ENCODE measurements at regions of chr16 and their contacts with region 1.

Region 1: DNA sequence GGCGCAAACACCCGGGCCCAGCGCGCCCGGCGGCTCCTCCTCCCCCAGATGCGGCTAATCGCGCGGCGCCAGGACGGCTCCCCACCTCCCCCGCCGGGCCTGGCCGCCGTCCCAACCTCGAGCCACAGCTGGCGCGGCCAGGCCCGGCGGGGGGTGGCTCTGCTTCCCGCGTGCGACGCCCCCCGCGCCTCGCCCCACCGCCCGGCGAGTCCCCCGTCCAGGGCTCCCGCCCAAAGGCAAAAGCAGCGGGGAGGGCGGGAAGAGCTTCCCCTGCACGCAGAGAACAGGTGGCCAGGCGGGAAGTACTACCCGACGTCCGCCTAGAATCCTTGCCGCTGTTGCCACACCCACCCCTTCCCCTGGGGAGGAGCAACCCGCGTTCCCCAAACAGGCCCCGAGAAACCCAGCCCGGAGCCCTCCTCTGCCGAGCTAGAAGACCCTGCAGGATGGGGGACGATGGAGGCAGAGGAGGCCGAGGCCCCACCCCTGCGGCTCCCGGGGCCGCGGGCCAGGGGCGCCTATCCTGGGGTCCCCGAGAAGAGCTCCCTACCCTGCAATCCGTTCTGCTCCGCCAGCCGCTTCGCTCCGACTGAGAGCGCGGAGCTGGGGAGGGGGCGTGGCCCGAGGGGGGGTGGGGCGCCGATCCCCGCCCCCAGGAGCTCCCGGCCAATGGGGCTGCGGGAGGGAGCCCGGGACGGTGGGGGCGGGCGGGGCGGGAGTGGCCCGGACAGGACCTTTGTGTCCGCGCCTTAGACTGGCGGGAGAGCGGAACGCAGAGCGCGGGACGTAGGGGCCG is at the start of gene CARHSP1:
- DNase-seq: peak; percentile 65 to 87 (median 74)
- ATAC-seq: peak; percentile 91
- H3K4me3 ChIP-seq: peak within 1 kb of the TSS; percentile 74
- H3K4me3 Mint-ChIP-seq: peak within 1 kb of the TSS; percentile 93 to 98 (median 96)
- H3K27ac ChIP-seq: peak within 1 kb of the TSS; percentile 67
- H3K27ac Mint-ChIP-seq: peak within 1 kb of the TSS; percentile 88 to 98 (median 95)
- H3K4me1 ChIP-seq: peaks cover 6 to 12% of the 10 kb centered on the region in 2 donors
- H3K4me1 Mint-ChIP-seq: peaks cover 30 to 63% (median 51%) of the 10 kb centered on the region in 7 donors
- H3K27me3 ChIP-seq: no peaks in the 10 kb centered on the region
- H3K27me3 Mint-ChIP-seq: no peaks in the 10 kb centered on the region
- total RNA-seq, gene CARHSP1: 29.6 to 123 (median 39.9) TPM

Region 2: DNA sequence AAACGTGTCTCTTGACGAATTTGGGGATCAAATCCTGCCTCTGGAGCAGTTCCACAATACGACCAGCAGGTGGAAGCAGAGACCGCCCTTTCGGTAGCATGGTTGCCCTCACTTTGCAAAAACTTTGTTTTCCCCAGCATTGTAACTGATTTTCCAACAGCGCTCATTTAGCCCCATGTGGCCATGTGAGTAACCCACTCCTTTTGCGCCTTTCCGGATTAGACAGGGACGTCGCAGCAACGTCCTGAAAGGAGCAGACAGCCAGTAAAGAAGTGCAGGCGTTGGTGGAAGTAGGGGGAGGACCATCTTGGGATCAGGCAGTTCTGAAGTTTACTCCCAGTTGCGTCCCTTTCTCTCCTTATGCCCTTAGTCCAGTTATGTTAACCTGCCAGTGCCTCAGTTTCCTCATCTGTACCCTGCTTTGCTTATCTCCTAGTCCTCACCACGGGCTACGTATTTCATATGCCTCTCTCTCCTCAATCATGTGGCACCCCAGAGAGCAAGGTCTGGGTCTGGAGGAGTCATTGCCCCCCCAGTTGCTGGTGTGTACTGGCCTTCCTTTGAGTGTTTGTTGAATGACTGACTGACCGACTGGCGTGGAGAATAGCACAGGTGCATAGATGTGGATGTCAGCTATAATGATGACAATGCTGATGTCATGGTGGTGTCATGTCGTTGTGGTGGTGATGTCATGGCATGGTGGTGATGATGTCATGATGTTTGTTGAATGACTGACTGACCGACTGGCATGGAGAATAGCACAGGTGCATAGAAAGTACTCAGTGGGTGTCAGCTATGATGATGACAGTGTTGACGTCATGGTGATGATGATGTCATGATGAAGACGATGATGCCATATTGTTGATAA is 300.6 kb before region 1 on chr16:
- CTCF ChIA-PET with region 1: no interaction called
- POLR2A ChIA-PET with region 1: no interaction called
- intact Hi-C with region 1: loop called in 1 of 2 experiments (anchors 5 kb)
- DNase-seq: peak; percentile 53 to 86 (median 79)
- ATAC-seq: peak; percentile 97
- H3K4me3 ChIP-seq: no peak overlapping the region
- H3K4me3 Mint-ChIP-seq: no peak overlapping the region
- H3K27ac ChIP-seq: no peak overlapping the region
- H3K27ac Mint-ChIP-seq: peak overlapping the region in 7 of 9 donors; percentile 10 to 69 (median 60)
- H3K4me1 ChIP-seq: no peaks in the 10 kb centered on the region
- H3K4me1 Mint-ChIP-seq: peaks cover 0 to 8% (median 4%) of the 10 kb centered on the region in 7 donors
- H3K27me3 ChIP-seq: no peaks in the 10 kb centered on the region
- H3K27me3 Mint-ChIP-seq: peaks cover 4 to 19% (median 11%) of the 10 kb centered on the region in 5 donors

Region 3: DNA sequence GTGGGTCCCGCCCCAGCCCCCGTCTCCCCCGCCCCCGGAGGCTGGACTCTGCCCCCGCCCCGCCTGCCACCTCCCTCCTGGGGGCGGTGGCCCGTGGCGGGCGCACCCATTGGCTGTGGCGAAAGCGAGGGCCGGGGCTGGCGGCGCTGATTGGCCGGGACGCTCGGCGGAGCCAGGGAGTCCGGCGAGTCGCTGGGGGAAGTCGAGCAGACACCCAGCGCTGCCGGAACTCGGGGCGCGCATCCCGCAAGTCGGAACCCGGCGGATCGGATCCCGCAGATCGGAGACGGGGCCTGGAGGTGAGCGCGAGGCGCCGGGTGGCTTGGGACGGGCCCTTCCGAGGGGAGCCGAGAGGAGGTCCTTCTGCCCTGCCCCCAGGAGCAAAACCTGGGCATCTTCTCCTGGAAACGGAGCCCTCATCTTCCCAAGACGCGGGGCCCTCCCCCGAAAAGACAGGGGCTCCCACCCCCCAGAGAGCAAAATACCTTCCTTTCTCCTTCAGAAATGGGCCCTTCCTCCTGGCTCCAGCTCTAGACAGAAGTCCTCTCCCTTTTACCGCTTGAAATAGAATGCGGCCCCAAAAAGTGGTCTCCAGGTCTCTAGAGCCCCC is 194.1 kb before region 1 on chr16 and contains the start of gene ABAT:
- CTCF ChIA-PET with region 1: no interaction called
- POLR2A ChIA-PET with region 1: interaction called, 5 read pairs
- intact Hi-C with region 1: loop called (anchors 1 kb)
- DNase-seq: peak; percentile 83 to 92 (median 87)
- ATAC-seq: peak; percentile 99
- H3K4me3 ChIP-seq: peak within 1 kb of the TSS; percentile 57
- H3K4me3 Mint-ChIP-seq: peak within 1 kb of the TSS; percentile 78 to 93 (median 88)
- H3K27ac ChIP-seq: peak within 1 kb of the TSS; percentile 70
- H3K27ac Mint-ChIP-seq: peak within 1 kb of the TSS; percentile 58 to 91 (median 78)
- H3K4me1 ChIP-seq: peaks cover 9 to 18% of the 10 kb centered on the region in 2 donors
- H3K4me1 Mint-ChIP-seq: peaks cover 6 to 22% (median 19%) of the 10 kb centered on the region in 7 donors
- H3K27me3 ChIP-seq: no peaks in the 10 kb centered on the region
- H3K27me3 Mint-ChIP-seq: peaks cover 0 to 7% (median 0%) of the 10 kb centered on the region in 5 donors
- total RNA-seq, gene ABAT: 5.4 to 11.5 (median 9.3) TPM

Region 4: DNA sequence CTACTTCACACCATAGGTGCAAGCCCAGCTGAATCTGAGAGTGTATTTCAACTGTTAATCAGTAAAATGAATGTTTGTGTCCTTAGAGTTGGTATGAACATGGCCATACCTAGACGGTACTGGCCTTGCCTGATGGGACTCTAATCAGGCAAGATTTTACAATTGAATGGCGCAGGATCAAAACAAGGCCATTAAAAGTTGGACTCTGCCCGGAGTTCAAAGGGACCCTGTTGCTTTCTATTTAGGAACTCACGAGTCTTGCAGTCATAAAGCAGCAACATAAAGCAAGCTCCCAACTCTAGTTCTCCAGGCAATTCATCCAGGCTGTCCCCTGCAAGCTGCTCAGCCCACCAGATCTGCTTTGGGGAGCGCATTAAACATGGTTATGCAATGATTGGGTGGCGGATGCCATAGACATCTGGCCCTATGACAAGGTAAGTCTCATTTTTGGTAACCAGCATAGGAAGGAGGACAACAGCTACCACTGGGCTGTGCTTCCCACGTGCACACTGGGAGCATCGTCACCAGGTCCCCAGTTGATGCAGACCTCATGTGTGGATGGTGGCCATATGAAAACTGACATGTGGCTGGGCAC is 79.9 kb before region 1 on chr16:
- CTCF ChIA-PET with region 1: no interaction called
- POLR2A ChIA-PET with region 1: no interaction called
- intact Hi-C with region 1: no loop called
- DNase-seq: no peak
- ATAC-seq: no peak
- H3K4me3 ChIP-seq: no peak overlapping the region
- H3K4me3 Mint-ChIP-seq: no peak overlapping the region
- H3K27ac ChIP-seq: no peak overlapping the region
- H3K27ac Mint-ChIP-seq: no peak overlapping the region
- H3K4me1 ChIP-seq: no peaks in the 10 kb centered on the region
- H3K4me1 Mint-ChIP-seq: peaks cover 0 to 8% (median 2%) of the 10 kb centered on the region in 7 donors
- H3K27me3 ChIP-seq: no peaks in the 10 kb centered on the region
- H3K27me3 Mint-ChIP-seq: no peaks in the 10 kb centered on the region

Region 5: DNA sequence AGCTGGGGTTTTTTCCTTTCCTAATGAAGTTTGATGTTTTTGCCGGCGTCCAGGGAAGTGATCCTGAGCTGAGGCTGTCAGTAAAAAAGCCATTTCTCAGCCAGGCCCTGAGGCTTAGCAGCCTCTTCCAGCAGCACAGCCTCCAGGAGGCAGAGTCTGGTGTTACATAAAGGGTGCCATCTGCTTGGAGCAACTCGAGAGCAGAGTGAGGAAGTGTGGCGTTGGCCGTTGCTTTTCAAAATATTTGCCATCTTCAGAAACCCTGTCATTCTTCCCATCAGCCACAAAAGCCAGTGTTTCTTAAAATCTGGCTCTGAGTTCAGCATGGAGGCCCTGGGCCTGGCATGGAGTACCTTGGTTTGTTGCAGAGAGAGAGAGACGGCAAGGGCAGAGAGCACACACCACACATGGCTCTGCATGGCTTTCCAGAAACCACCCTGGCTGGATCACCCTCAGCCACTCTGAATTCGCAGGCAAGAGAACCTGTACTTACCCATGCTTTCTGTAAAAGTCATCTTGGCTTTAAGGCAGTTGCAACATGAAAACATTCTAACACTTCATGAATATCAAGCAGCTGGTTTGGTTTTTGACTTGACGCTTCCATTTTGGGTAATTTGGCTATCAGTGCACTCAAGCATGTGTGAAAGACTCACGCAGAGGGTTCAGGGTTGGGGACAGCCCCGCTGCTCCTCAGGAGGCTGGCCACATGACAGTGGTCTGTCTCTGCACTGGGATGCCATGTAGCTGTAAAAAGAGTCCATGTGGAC is 49.9 kb before region 1 on chr16:
- CTCF ChIA-PET with region 1: interaction called, 3 read pairs
- POLR2A ChIA-PET with region 1: interaction called, 3 read pairs
- intact Hi-C with region 1: loop called in 1 of 2 experiments (anchors 5 kb)
- DNase-seq: no peak
- ATAC-seq: no peak
- H3K4me3 ChIP-seq: no peak overlapping the region
- H3K4me3 Mint-ChIP-seq: peak overlapping the region in 1 of 10 donors; percentile 32
- H3K27ac ChIP-seq: no peak overlapping the region
- H3K27ac Mint-ChIP-seq: peak overlapping the region in 2 of 9 donors; percentile 53 to 81
- H3K4me1 ChIP-seq: peaks cover 0 to 5% of the 10 kb centered on the region in 2 donors
- H3K4me1 Mint-ChIP-seq: peaks cover 16 to 29% (median 23%) of the 10 kb centered on the region in 7 donors
- H3K27me3 ChIP-seq: no peaks in the 10 kb centered on the region
- H3K27me3 Mint-ChIP-seq: no peaks in the 10 kb centered on the region

Region 6: DNA sequence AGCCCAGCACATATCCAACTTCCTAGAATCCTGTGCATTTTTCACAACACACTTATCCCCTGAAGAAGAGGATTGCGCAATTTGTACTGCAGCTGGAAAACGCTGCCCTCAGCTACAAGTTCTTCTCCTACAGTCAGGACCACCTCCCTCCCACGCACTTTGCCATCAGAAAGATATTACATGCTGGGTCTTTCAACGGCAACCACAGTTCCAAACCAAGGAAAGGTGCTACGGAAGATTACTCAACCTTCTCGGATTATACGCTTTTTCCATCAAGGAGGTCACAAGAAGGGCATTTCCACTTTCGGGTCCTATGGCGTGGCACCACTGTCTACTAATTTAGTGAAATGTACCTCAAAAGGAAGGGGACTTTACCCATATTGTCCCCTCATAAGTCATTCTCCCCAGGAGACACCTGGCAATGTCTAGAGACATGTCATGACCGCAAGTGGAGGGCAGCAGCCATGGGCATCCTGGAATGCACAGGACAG is 59.9 kb after region 1 on chr16:
- CTCF ChIA-PET with region 1: no interaction called
- POLR2A ChIA-PET with region 1: no interaction called
- intact Hi-C with region 1: no loop called
- DNase-seq: no peak
- ATAC-seq: no peak
- H3K4me3 ChIP-seq: no peak overlapping the region
- H3K4me3 Mint-ChIP-seq: no peak overlapping the region
- H3K27ac ChIP-seq: no peak overlapping the region
- H3K27ac Mint-ChIP-seq: no peak overlapping the region
- H3K4me1 ChIP-seq: peaks cover 0 to 10% of the 10 kb centered on the region in 2 donors
- H3K4me1 Mint-ChIP-seq: peaks cover 23 to 68% (median 45%) of the 10 kb centered on the region in 7 donors
- H3K27me3 ChIP-seq: no peaks in the 10 kb centered on the region
- H3K27me3 Mint-ChIP-seq: no peaks in the 10 kb centered on the region

Region 7: GRCh38 chr16:8958344-8959167 is 89.9 kb after region 1 on chr16:
- CTCF ChIA-PET with region 1: no interaction called
- POLR2A ChIA-PET with region 1: no interaction called
- intact Hi-C with region 1: loop called (anchors 1 to 2 kb)
- DNase-seq: peak in 1 of 9 donors; percentile 20
- ATAC-seq: peak; percentile 6
- H3K4me3 ChIP-seq: peak overlapping the region; percentile 46
- H3K4me3 Mint-ChIP-seq: peak overlapping the region; percentile 79 to 98 (median 93)
- H3K27ac ChIP-seq: peak overlapping the region; percentile 14
- H3K27ac Mint-ChIP-seq: peak overlapping the region; percentile 36 to 94 (median 79)
- H3K4me1 ChIP-seq: peaks cover 70 to 76% of the 10 kb centered on the region in 2 donors
- H3K4me1 Mint-ChIP-seq: peaks cover 64 to 83% (median 76%) of the 10 kb centered on the region in 7 donors
- H3K27me3 ChIP-seq: no peaks in the 10 kb centered on the region
- H3K27me3 Mint-ChIP-seq: no peaks in the 10 kb centered on the region

Region 8: GRCh38 chr16:10385725-10386516 is 1517.3 kb after region 1 on chr16 and contains the start of gene ATF7IP2:
- CTCF ChIA-PET with region 1: no interaction called
- POLR2A ChIA-PET with region 1: no interaction called
- intact Hi-C with region 1: loop called in 1 of 2 experiments (anchors 5 kb)
- DNase-seq: peak; percentile 68 to 85 (median 83)
- ATAC-seq: peak; percentile 99
- H3K4me3 ChIP-seq: peak within 1 kb of the TSS; percentile 67
- H3K4me3 Mint-ChIP-seq: peak within 1 kb of the TSS; percentile 89 to 99 (median 98)
- H3K27ac ChIP-seq: peak within 1 kb of the TSS; percentile 84
- H3K27ac Mint-ChIP-seq: peak within 1 kb of the TSS; percentile 90 to 99 (median 97)
- H3K4me1 ChIP-seq: peaks cover 14 to 16% of the 10 kb centered on the region in 2 donors
- H3K4me1 Mint-ChIP-seq: peaks cover 31 to 52% (median 47%) of the 10 kb centered on the region in 7 donors
- H3K27me3 ChIP-seq: no peaks in the 10 kb centered on the region
- H3K27me3 Mint-ChIP-seq: peaks cover 0 to 3% (median 0%) of the 10 kb centered on the region in 5 donors
- total RNA-seq, gene ATF7IP2: 56.5 to 75.5 (median 67.1) TPM